Caco-2 (cell line): ENCODE measurements at regions of chr11 and their contacts with region 1.

Region 1: DNA sequence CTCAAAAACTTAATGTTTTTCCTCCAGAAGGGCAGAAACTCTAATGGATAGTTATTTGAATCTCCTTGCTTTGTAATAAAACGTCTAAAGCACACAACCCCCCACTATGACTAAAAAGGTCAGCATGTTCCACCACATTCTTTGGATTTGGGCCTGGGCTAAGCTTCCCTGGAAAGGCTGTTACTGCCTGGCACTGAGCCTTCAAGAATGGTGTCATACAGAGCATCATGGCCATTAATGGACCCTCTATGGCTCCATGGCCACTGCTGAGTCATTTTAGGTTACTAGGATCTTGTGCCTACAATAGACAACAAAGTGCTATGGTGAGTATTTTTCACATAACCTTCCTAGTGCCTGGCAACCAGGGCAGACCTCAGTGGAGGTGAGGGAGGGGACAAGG is 242.6 kb upstream of the FAT3 start:
- DNase-seq: no peak
- H3K4me3 ChIP-seq: no peak overlapping the region
- H3K4me3 Mint-ChIP-seq: no peak overlapping the region
- H3K27ac Mint-ChIP-seq: no peak overlapping the region
- H3K4me1 ChIP-seq: no peaks in the 10 kb centered on the region
- H3K4me1 Mint-ChIP-seq: no peaks in the 10 kb centered on the region
- H3K27me3 ChIP-seq: no peaks in the 10 kb centered on the region
- H3K27me3 Mint-ChIP-seq: no peaks in the 10 kb centered on the region
- CTCF ChIP-seq: no peak

Region 2: GRCh38 chr11:91998481-91998880 is 16.5 kb after region 1 on chr11:
- CTCF ChIA-PET with region 1: no interaction called
- POLR2A ChIA-PET with region 1: no interaction called
- intact Hi-C with region 1: loop called (anchors 1 kb)
- DNase-seq: peak; percentile 49 to 61
- H3K4me3 ChIP-seq: no peak overlapping the region
- H3K4me3 Mint-ChIP-seq: no peak overlapping the region
- H3K27ac Mint-ChIP-seq: no peak overlapping the region
- H3K4me1 ChIP-seq: peaks cover 15% of the 10 kb centered on the region; the same call in 1 of the 2 replicates
- H3K4me1 Mint-ChIP-seq: peaks cover 13% of the 10 kb centered on the region
- H3K27me3 ChIP-seq: no peaks in the 10 kb centered on the region
- H3K27me3 Mint-ChIP-seq: no peaks in the 10 kb centered on the region
- CTCF ChIP-seq: no peak

Region 3: GRCh38 chr11:92111287-92111686 is 129.3 kb after region 1 on chr11:
- CTCF ChIA-PET with region 1: no interaction called
- POLR2A ChIA-PET with region 1: no interaction called
- intact Hi-C with region 1: no loop called
- DNase-seq: peak in 1 of 2 experiments; percentile 37
- H3K4me3 ChIP-seq: no peak overlapping the region
- H3K4me3 Mint-ChIP-seq: no peak overlapping the region
- H3K27ac Mint-ChIP-seq: no peak overlapping the region
- H3K4me1 ChIP-seq: no peaks in the 10 kb centered on the region
- H3K4me1 Mint-ChIP-seq: no peaks in the 10 kb centered on the region
- H3K27me3 ChIP-seq: 0 out of 2 replicates have a peak, but pooled peaks cover 1% of the 10 kb centered on the region
- H3K27me3 Mint-ChIP-seq: peaks cover 2% of the 10 kb centered on the region
- CTCF ChIP-seq: no peak